WTC11 (cell line): ENCODE measurements at regions of chr19 and their contacts with region 1.

Region 1: DNA sequence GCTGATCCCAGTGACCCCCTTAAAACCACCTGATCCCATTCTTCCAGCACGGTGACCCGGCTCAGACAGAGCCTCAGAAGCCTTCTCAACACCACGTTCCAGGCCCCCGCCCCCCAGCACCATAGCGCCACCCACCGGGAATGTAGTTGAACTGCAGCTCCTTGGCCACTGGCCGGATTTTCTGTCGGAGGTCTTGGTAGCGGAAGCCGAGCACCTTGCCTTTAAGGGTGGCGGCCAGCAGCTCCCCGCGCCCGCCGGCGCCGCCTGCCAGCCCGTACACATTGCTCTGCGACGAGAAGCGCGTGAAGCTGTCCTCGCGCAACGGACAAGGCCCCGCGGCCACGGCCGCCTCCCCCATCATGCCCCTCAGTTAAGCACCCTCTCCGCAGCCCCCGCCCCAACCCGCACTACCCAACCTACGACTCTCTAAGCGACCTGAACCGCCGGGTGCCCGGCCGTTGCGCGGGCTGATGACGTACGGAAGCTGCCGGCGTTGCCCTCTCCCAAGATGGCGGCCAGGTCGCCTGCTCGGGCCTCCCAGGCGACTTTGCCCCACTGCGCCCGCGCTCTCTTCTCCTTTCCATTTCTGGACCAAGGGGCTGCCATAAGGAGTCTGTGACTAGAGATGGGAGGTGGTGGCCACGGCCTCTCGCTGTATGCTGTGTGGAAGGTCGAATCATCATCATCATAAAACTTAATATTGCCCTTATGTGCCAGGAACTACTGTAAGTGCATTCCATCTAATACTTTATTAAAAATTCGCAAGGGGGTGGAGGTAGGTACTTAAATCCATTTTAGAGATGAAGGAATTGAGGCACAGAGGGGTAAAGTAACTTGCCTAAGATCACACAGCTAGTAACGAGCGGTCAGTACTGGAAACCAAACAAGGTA is at the start of gene KPTN:
- DNase-seq: peak; percentile 91
- ATAC-seq: peak; percentile 62
- H3K4me3 Mint-ChIP-seq: peak within 1 kb of the TSS; percentile 96
- H3K27ac Mint-ChIP-seq: peak within 1 kb of the TSS; percentile 98
- H3K4me1 Mint-ChIP-seq: peaks cover 18% of the 10 kb centered on the region
- H3K27me3 Mint-ChIP-seq: peaks cover 9% of the 10 kb centered on the region
- CTCF ChIP-seq: peak; percentile 96
- total RNA-seq, gene KPTN: 24.5 to 30.2 TPM (median 29.5 TPM) in 3 replicates

Region 2: DNA sequence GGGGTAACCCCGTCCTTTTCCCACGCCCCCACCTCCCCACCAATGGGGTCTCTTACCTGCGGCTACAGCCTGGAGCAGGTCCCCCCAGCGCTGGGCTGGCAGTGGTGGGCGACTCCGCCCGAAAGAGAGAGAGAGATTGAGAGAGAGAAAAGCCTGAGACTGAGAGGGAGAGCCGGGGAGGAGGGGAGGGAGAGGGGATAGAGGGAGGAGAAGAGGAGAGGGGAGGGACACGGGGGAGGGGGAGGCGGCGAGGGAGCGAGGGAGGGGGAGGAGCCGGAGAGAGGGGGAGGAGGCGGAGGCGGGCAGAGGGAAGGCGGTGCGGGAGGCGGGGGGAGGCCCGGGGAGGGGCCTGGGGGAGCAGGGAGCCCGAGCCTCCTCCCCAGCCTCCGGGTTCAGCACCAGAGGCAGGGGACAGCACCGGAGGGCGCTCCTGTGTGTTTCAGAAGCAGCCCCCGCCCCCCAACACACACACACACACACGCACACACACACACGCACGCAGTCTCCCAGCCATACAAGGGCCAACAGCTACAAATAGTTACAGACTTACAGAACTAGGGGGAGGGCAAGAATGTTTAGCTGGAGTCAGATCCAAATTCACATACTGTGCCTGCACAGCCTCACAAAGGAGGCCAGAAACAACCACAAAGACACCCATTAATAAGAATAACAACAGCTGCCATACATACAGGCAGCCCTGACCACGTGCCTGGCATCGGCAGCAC is 12.2 kb before region 1 on chr19 and contains the start of gene SLC8A2:
- CTCF ChIA-PET with region 1: interaction called, 15 read pairs
- POLR2A ChIA-PET with region 1: interaction called, 3 read pairs
- DNase-seq: peak; percentile 91
- ATAC-seq: peak; percentile 65
- H3K4me3 Mint-ChIP-seq: peak within 1 kb of the TSS; percentile 84
- H3K27ac Mint-ChIP-seq: peak within 1 kb of the TSS; percentile 16; the same call in 1 of the 2 replicates
- H3K4me1 Mint-ChIP-seq: peaks cover 34% of the 10 kb centered on the region
- H3K27me3 Mint-ChIP-seq: peaks cover 18% of the 10 kb centered on the region
- CTCF ChIP-seq: no peak
- total RNA-seq, gene SLC8A2: 6.5 to 8.5 TPM (median 6.8 TPM) in 3 replicates

Region 3: DNA sequence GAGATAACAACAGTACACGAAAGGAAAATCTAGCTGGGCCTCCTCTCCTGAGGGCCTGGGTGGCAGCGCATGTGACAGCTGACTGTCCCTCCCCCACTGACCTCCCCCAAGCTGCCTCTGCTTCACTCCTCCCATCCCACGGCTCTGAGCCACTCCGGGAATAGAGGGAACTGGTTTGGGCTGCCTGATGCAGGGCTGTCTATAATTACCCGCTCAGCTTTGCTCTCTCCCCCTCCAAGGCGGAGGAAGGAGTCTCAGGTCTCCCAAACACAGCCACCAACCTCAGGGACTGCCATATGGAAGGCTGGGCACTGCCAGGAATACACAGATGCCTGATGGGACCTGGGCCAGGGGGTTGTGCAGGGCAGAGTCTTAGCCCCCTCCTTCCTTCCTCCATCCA is 23.0 kb after region 1 on chr19:
- CTCF ChIA-PET with region 1: interaction called, 14 read pairs
- POLR2A ChIA-PET with region 1: no interaction called
- DNase-seq: no peak
- ATAC-seq: no peak
- H3K4me3 Mint-ChIP-seq: no peak overlapping the region
- H3K27ac Mint-ChIP-seq: 0 out of 2 replicates have a peak overlapping the region, but pooled peaks have one; percentile 23
- H3K4me1 Mint-ChIP-seq: no peaks in the 10 kb centered on the region
- H3K27me3 Mint-ChIP-seq: no peaks in the 10 kb centered on the region
- CTCF ChIP-seq: no peak

Region 4: GRCh38 chr19:47697863-47698609 is 214.0 kb after region 1 on chr19:
- CTCF ChIA-PET with region 1: interaction called, 11 read pairs
- POLR2A ChIA-PET with region 1: no interaction called
- DNase-seq: peak; percentile 86
- ATAC-seq: peak; percentile 84
- H3K4me3 Mint-ChIP-seq: no peak overlapping the region
- H3K27ac Mint-ChIP-seq: peak overlapping the region; percentile 91
- H3K4me1 Mint-ChIP-seq: 0 out of 2 replicates have a peak, but pooled peaks cover 2% of the 10 kb centered on the region
- H3K27me3 Mint-ChIP-seq: no peaks in the 10 kb centered on the region
- CTCF ChIP-seq: peak; percentile 93